Right ventricle myocardium inferior (tissue), 1 donor: ENCODE measurements at regions of chr4 and their contacts with region 1.

Region 1: GRCh38 chr4:47831026-47831679 is 6.7 kb downstream of the CORIN start:
- DNase-seq: no peak
- ATAC-seq: peak; percentile 75

Region 2: DNA sequence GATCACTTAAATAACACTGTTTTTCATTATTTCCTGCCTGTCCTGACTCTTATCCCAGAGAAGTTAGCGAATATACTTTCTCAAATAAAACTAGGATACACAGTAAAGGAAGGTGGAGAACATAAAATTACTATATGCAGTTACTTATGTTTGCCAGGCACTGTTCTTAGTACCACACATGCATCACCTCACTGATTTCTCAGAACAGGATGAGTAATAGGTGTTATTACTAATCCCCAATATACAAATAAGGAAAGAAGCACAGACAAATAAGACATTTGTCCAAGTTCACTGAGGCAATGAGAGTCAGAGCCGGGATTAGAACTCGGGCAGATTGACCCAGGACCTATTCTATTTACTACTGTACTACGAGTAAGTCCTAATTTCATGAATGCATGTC is 85.0 kb before region 1 on chr4:
- intact Hi-C with region 1: loop called (anchors 2 kb)
- DNase-seq: no peak
- ATAC-seq: no peak